PC-9 (cell line): ENCODE measurements at regions of chr20 and their contacts with region 1.

Region 1: GRCh38 chr20:22339091-22339881 is 245.1 kb downstream of the FOXA2 start:
- DNase-seq: peak in 1 of 2 experiments; percentile 43
- H3K4me3 ChIP-seq: no peak overlapping the region
- H3K27ac ChIP-seq: no peak overlapping the region
- H3K4me1 ChIP-seq: peaks cover 21% of the 10 kb centered on the region
- H3K27me3 ChIP-seq: no peaks in the 10 kb centered on the region
- CTCF ChIP-seq: peak; percentile 94

Region 2: GRCh38 chr20:22385602-22386305 is 46.5 kb after region 1 on chr20:
- CTCF ChIA-PET with region 1: no interaction called
- POLR2A ChIA-PET with region 1: no interaction called
- intact Hi-C with region 1: loop called (anchors 1 kb)
- DNase-seq: peak in 1 of 2 experiments; percentile 7
- H3K4me3 ChIP-seq: no peak overlapping the region
- H3K27ac ChIP-seq: no peak overlapping the region
- H3K4me1 ChIP-seq: peaks cover 46% of the 10 kb centered on the region
- H3K27me3 ChIP-seq: no peaks in the 10 kb centered on the region
- CTCF ChIP-seq: peak; percentile 28; the same call in 1 of the 2 replicates

Region 3: DNA sequence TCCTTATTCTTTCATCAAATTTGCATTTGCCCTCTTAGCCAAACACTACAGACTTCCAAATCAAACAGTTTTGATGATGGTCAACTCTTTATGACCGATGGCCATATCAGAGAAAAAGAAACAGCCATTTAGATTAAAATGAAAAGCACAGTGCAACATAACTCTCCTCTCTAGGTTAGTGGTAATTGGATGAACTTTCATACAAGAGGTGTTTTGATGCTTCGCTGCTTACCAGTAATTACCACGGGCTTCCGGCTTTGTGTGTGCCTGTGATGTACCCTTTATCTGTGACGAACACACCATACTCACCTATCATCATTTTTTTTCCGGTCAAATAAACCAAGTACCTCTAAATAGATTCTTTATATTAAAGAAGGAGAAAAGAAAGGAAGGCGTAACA is 63.3 kb after region 1 on chr20:
- CTCF ChIA-PET with region 1: no interaction called
- POLR2A ChIA-PET with region 1: no interaction called
- intact Hi-C with region 1: no loop called
- DNase-seq: no peak
- H3K4me3 ChIP-seq: no peak overlapping the region
- H3K27ac ChIP-seq: no peak overlapping the region
- H3K4me1 ChIP-seq: peaks cover 30% of the 10 kb centered on the region
- H3K27me3 ChIP-seq: no peaks in the 10 kb centered on the region
- CTCF ChIP-seq: no peak

Region 4: GRCh38 chr20:22453239-22454080 is 114.2 kb after region 1 on chr20:
- CTCF ChIA-PET with region 1: interaction called, 5 read pairs
- POLR2A ChIA-PET with region 1: no interaction called
- intact Hi-C with region 1: loop called (anchors 5 kb)
- DNase-seq: peak in 1 of 2 experiments; percentile 45
- H3K4me3 ChIP-seq: no peak overlapping the region
- H3K27ac ChIP-seq: no peak overlapping the region
- H3K4me1 ChIP-seq: no peaks in the 10 kb centered on the region
- H3K27me3 ChIP-seq: no peaks in the 10 kb centered on the region
- CTCF ChIP-seq: peak; percentile 81

Region 5: DNA sequence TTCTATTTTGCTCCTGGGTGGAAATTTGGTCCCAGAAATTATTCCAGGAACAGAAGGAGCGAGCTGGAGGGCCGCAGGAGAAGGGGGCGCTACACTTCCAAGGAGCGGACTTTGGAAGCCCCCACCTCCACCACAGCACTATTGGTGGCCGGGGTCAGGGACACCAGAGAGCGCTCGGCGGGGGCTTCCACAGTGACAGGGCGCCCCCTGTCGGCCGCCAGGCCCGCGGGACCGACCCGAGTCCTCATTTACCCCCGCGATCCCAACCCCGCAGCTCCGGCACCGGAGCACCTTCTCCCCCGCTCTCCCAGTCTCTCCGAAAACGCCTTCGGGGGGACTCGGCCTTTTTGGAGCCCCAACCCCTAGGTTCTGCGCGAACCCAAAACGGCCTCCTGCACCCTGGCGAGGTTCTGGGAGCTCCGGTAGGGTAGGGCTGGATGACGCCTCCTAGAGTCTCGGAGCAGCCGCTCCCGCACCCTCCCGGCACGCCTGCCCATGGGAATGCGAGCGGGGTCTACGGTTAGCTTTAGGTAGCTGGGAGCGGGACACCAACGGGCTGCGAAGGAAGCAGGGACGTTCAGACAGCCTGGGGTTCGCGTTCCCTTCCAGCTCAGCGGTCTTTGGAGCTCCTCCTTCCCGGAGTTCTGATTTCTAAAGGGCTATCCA is 247.5 kb after region 1 on chr20:
- CTCF ChIA-PET with region 1: no interaction called
- POLR2A ChIA-PET with region 1: no interaction called
- intact Hi-C with region 1: loop called (anchors 1 kb)
- DNase-seq: no peak
- H3K4me3 ChIP-seq: no peak overlapping the region
- H3K27ac ChIP-seq: no peak overlapping the region
- H3K4me1 ChIP-seq: no peaks in the 10 kb centered on the region
- H3K27me3 ChIP-seq: no peaks in the 10 kb centered on the region
- CTCF ChIP-seq: peak; percentile 64

Region 6: GRCh38 chr20:22684072-22684762 is 344.9 kb after region 1 on chr20:
- CTCF ChIA-PET with region 1: interaction called, 17 read pairs
- POLR2A ChIA-PET with region 1: no interaction called
- intact Hi-C with region 1: loop called (anchors 1 kb)
- DNase-seq: peak; percentile 56 to 68
- H3K4me3 ChIP-seq: no peak overlapping the region
- H3K27ac ChIP-seq: no peak overlapping the region
- H3K4me1 ChIP-seq: no peaks in the 10 kb centered on the region
- H3K27me3 ChIP-seq: no peaks in the 10 kb centered on the region
- CTCF ChIP-seq: peak; percentile 92

Region 7: GRCh38 chr20:23340524-23340923 is 1001.2 kb after region 1 on chr20:
- CTCF ChIA-PET with region 1: no interaction called
- POLR2A ChIA-PET with region 1: no interaction called
- intact Hi-C with region 1: loop called (anchors 1 kb)
- DNase-seq: peak; percentile 59 to 61
- H3K4me3 ChIP-seq: no peak overlapping the region
- H3K27ac ChIP-seq: no peak overlapping the region
- H3K4me1 ChIP-seq: no peaks in the 10 kb centered on the region
- H3K27me3 ChIP-seq: no peaks in the 10 kb centered on the region
- CTCF ChIP-seq: peak; percentile 85